Esophagus squamous epithelium (tissue), 5 donors: ENCODE measurements at regions of chr4 and their contacts with region 1.

Region 1: GRCh38 chr4:156487107-156487506 is 484.5 kb downstream of the PDGFC start:
- DNase-seq: no peak
- H3K4me3 ChIP-seq: no peak overlapping the region
- H3K27ac ChIP-seq: no peak overlapping the region
- H3K4me1 ChIP-seq: no peaks in the 10 kb centered on the region
- H3K27me3 ChIP-seq: no peaks in the 10 kb centered on the region
- CTCF ChIP-seq: no peak
- POLR2A ChIP-seq: no peak

Region 2: GRCh38 chr4:156536661-156537060 is 49.6 kb after region 1 on chr4:
- intact Hi-C with region 1: no loop called
- DNase-seq: no peak
- H3K4me3 ChIP-seq: no peak overlapping the region
- H3K27ac ChIP-seq: no peak overlapping the region
- H3K4me1 ChIP-seq: peaks cover 0 to 20% (median 0%) of the 10 kb centered on the region in 3 donors
- H3K27me3 ChIP-seq: no peaks in the 10 kb centered on the region
- CTCF ChIP-seq: no peak
- POLR2A ChIP-seq: no peak

Region 3: DNA sequence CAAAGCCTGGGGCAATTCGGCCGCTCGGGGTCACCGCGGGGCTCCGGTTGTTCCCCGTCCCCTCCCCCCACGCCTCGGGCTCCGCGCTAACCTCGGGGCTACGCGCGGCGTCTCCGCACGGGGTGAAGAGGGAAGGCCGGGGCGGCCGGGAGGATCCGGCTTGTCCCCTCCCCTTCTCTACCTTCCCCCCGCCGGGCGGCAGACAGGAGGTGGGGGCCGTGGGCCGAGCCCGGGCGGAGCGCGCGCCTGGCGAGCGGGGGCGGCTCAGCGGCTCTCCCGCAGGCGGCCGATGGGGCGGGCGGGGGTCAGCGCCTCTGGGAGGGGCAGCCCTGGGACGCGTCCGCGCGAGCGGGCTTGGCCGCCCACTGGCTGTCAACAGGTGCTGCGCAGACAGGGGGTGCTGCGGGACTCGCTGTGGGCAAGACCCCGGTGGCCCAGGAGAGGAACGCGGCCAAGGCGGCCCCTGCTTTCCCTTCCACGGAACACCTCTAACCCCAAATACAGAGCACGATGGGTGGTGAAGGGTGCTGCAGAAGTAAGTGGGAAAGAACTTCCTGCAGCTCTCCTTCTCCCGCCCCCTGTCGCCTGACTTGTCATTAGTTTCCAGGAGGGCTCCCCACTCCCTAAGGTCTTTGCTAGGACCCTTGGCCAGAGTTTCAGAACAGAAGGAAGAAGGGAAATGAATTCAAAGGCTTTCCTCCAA is 484.7 kb after region 1 on chr4 and contains the start of gene PDGFC:
- intact Hi-C with region 1: loop called (anchors 10 kb)
- DNase-seq: no peak
- H3K4me3 ChIP-seq: peak within 1 kb of the TSS; percentile 66 to 82 (median 72)
- H3K27ac ChIP-seq: peak within 1 kb of the TSS; percentile 80 to 90 (median 89)
- H3K4me1 ChIP-seq: peaks cover 6 to 39% (median 10%) of the 10 kb centered on the region in 3 donors
- H3K27me3 ChIP-seq: peaks cover 0 to 7% (median 0%) of the 10 kb centered on the region in 4 donors
- CTCF ChIP-seq: peak in 5 of 6 experiments; percentile 29 to 50 (median 33)
- POLR2A ChIP-seq: peak in 2 of 4 donors; percentile 48 to 49
- total RNA-seq, gene PDGFC: 2.9 to 22.1 (median 7.7) TPM